GM10248 (cell line): ENCODE measurements at regions of chr2 and their contacts with region 1.

Region 1: DNA sequence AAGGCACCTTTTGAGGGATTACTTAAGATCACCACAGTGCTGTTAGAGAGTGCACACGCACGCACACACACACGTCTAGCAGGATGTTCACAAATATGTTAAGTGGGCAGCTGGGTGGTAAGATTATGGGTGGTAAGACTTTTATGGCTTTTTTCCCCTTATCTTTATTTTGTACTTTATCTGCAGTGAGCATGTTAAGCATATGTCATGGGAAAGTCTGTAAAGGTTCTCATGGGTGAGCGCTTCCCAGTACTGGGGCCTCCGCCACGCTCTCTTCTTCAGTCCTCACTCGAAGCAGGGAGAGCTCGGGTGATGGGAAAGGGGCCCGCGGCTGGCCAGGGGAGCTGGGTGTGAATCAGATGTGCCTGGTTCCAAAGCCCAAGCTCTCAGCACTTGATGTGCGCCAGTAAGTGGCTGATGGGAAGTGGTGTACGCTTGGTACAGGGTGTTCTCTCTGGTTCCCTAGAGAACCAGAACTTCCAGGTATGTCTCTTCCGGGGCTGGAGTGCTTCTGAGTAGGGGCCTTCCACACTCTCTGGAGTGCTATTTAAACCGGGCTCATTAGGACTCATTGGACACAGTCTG is 83.9 kb upstream of the YWHAQ start:
- DNase-seq: no peak
- CTCF ChIP-seq: no peak

Region 2: DNA sequence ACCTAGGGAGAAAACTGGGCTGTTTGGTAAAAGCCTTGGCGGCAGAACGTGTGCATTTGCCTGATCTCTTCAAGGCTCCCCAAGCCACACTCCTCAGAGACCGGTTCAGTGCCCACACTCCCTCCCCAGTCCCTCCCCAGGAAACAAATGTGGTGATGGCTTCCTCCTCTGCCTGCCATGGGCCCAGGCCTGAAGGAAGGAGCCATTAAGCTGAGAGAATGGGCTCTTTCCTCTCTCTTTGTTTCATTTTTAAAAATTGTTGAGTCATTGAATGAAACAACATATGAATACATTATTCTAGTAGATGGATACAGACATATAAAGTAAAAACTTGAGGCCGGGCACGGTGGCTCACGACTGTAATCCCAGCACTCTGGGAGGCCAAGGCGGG is 33.3 kb before region 1 on chr2:
- CTCF ChIA-PET with region 1: no interaction called
- POLR2A ChIA-PET with region 1: no interaction called
- DNase-seq: no peak
- CTCF ChIP-seq: no peak

Region 3: GRCh38 chr2:9703085-9703641 is 11.6 kb before region 1 on chr2:
- CTCF ChIA-PET with region 1: interaction called, 11 read pairs
- POLR2A ChIA-PET with region 1: no interaction called
- DNase-seq: no peak
- CTCF ChIP-seq: no peak